GM12878 (cell line): ENCODE measurements at regions of chr7 and their contacts with region 1.

Region 1: GRCh38 chr7:105268511-105269392 is 120.0 kb downstream of the SRPK2 start:
- DNase-seq: no peak
- ATAC-seq: peak; percentile 80
- H3K4me3 ChIP-seq: peak overlapping the region; percentile 66
- H3K27ac ChIP-seq: peak overlapping the region; percentile 79
- H3K4me1 ChIP-seq: peaks cover 6% of the 10 kb centered on the region; the same call in 1 of the 2 replicates
- H3K27me3 ChIP-seq: no peaks in the 10 kb centered on the region
- CTCF ChIP-seq: no peak
- EP300 ChIP-seq: no peak; a peak in 1 of 4 replicates
- POLR2A ChIP-seq: no peak
- RAD21 ChIP-seq: no peak

Region 2: DNA sequence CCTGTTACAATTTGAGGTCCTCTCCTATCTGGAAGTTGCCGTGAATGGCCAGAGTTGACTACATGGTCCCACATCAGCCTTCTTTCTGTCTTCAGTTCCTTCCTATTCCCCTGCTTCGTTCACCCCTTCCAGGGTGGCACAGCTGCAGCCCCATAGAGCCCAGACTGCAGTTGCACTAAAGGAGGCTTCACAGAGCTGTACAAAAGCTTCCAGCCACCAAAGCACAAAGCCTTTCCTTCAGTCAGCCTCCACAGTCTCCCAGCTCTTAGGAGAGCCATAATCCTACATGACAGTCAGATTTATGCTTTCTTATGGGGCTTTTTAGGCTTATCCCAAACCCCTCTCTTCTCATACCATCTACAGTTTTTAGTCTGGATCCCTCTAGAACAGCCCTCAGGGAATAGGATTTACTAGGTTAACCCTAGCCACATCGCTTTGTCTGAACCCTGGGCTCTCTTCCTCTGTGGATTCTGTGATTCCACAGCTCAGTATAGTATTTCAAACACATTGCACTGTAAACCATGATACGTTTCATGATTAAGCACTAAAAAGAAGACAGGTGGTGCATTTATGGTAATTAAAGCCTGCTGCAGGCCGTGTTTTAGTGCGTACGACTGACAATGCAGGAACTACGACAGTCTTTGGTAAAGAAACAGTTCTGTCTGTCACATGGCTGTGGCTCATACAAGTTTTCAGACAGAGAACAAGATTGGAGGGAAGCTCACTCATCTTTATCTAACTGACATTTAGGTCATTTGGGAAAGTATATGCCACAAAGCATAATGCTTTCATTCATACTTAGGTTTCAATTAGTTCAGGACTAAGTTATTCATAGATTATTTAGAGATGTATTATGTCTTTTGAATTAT is 463.1 kb before region 1 on chr7:
- CTCF ChIA-PET with region 1: no interaction called
- POLR2A ChIA-PET with region 1: no interaction called
- RAD21 ChIA-PET with region 1: no interaction called
- SMC1A ChIA-PET with region 1: no interaction called
- in situ Hi-C with region 1: no loop called
- intact Hi-C with region 1: no loop called
- DNase-seq: no peak
- ATAC-seq: no peak
- H3K4me3 ChIP-seq: no peak overlapping the region
- H3K27ac ChIP-seq: no peak overlapping the region
- H3K4me1 ChIP-seq: no peaks in the 10 kb centered on the region
- H3K27me3 ChIP-seq: peaks cover 0 to 1% of the 10 kb centered on the region in 2 experiments; a peak in 1 of 4 replicates
- CTCF ChIP-seq: no peak
- EP300 ChIP-seq: no peak
- POLR2A ChIP-seq: no peak
- RAD21 ChIP-seq: no peak

Region 3: GRCh38 chr7:105187302-105188169 is 81.2 kb before region 1 on chr7:
- CTCF ChIA-PET with region 1: no interaction called
- POLR2A ChIA-PET with region 1: interaction called, 6 read pairs
- RAD21 ChIA-PET with region 1: interaction called, 16 read pairs
- SMC1A ChIA-PET with region 1: interaction called, 4 read pairs
- in situ Hi-C with region 1: no loop called
- intact Hi-C with region 1: no loop called
- DNase-seq: peak; percentile 37
- ATAC-seq: peak; percentile 83
- H3K4me3 ChIP-seq: peak overlapping the region; percentile 6; the same call in 1 of the 2 replicates
- H3K27ac ChIP-seq: peak overlapping the region; percentile 13; the same call in 1 of the 2 replicates
- H3K4me1 ChIP-seq: peaks cover 11% of the 10 kb centered on the region; the same call in 1 of the 2 replicates
- H3K27me3 ChIP-seq: no peaks in the 10 kb centered on the region
- CTCF ChIP-seq: no peak
- EP300 ChIP-seq: no peak
- POLR2A ChIP-seq: no peak
- RAD21 ChIP-seq: no peak

Region 4: GRCh38 chr7:105238198-105238765 is 30.5 kb before region 1 on chr7:
- CTCF ChIA-PET with region 1: interaction called, 5 read pairs
- POLR2A ChIA-PET with region 1: interaction called, 4 read pairs
- RAD21 ChIA-PET with region 1: interaction called, 4 read pairs
- SMC1A ChIA-PET with region 1: interaction called, 13 read pairs
- in situ Hi-C with region 1: no loop called
- intact Hi-C with region 1: no loop called
- DNase-seq: no peak
- ATAC-seq: no peak
- H3K4me3 ChIP-seq: no peak overlapping the region
- H3K27ac ChIP-seq: no peak overlapping the region
- H3K4me1 ChIP-seq: no peaks in the 10 kb centered on the region
- H3K27me3 ChIP-seq: no peaks in the 10 kb centered on the region
- CTCF ChIP-seq: no peak
- EP300 ChIP-seq: no peak
- POLR2A ChIP-seq: no peak
- RAD21 ChIP-seq: no peak

Region 5: GRCh38 chr7:105257338-105257737 is 11.4 kb before region 1 on chr7:
- CTCF ChIA-PET with region 1: interaction called, 3 read pairs
- POLR2A ChIA-PET with region 1: interaction called, 5 read pairs
- RAD21 ChIA-PET with region 1: no interaction called
- SMC1A ChIA-PET with region 1: interaction called, 17 read pairs
- in situ Hi-C with region 1: no loop called
- intact Hi-C with region 1: no loop called
- DNase-seq: no peak
- ATAC-seq: peak; percentile 51
- H3K4me3 ChIP-seq: no peak overlapping the region
- H3K27ac ChIP-seq: no peak overlapping the region
- H3K4me1 ChIP-seq: no peaks in the 10 kb centered on the region; the same call in 1 of the 2 replicates
- H3K27me3 ChIP-seq: no peaks in the 10 kb centered on the region
- CTCF ChIP-seq: no peak
- EP300 ChIP-seq: no peak
- POLR2A ChIP-seq: no peak
- RAD21 ChIP-seq: no peak

Region 6: GRCh38 chr7:105278973-105279687 is 10.4 kb after region 1 on chr7:
- CTCF ChIA-PET with region 1: interaction called, 10 read pairs
- POLR2A ChIA-PET with region 1: interaction called, 8 read pairs
- RAD21 ChIA-PET with region 1: interaction called, 16 read pairs
- SMC1A ChIA-PET with region 1: interaction called, 20 read pairs
- in situ Hi-C with region 1: no loop called
- intact Hi-C with region 1: no loop called
- DNase-seq: no peak
- ATAC-seq: peak; percentile 80
- H3K4me3 ChIP-seq: no peak overlapping the region
- H3K27ac ChIP-seq: peak overlapping the region; percentile 4; the same call in 1 of the 2 replicates
- H3K4me1 ChIP-seq: no peaks in the 10 kb centered on the region
- H3K27me3 ChIP-seq: no peaks in the 10 kb centered on the region
- CTCF ChIP-seq: no peak
- EP300 ChIP-seq: 0 out of 4 replicates have a peak, but pooled peaks have one; percentile 16 to 32
- POLR2A ChIP-seq: no peak
- RAD21 ChIP-seq: no peak

Region 7: GRCh38 chr7:105298439-105298907 is 29.7 kb after region 1 on chr7:
- CTCF ChIA-PET with region 1: no interaction called
- POLR2A ChIA-PET with region 1: no interaction called
- RAD21 ChIA-PET with region 1: interaction called, 13 read pairs
- SMC1A ChIA-PET with region 1: interaction called, 11 read pairs
- in situ Hi-C with region 1: no loop called
- intact Hi-C with region 1: loop called (anchors 5 kb)
- DNase-seq: no peak
- ATAC-seq: peak; percentile 97
- H3K4me3 ChIP-seq: no peak overlapping the region
- H3K27ac ChIP-seq: peak overlapping the region; percentile 66
- H3K4me1 ChIP-seq: peaks cover 15% of the 10 kb centered on the region
- H3K27me3 ChIP-seq: no peaks in the 10 kb centered on the region
- CTCF ChIP-seq: no peak
- EP300 ChIP-seq: no peak
- POLR2A ChIP-seq: no peak
- RAD21 ChIP-seq: no peak

Region 8: GRCh38 chr7:105304040-105304895 is 35.5 kb after region 1 on chr7:
- CTCF ChIA-PET with region 1: interaction called, 3 read pairs
- POLR2A ChIA-PET with region 1: interaction called, 3 read pairs
- RAD21 ChIA-PET with region 1: interaction called, 7 read pairs
- SMC1A ChIA-PET with region 1: interaction called, 6 read pairs
- in situ Hi-C with region 1: no loop called
- intact Hi-C with region 1: loop called (anchors 5 kb)
- DNase-seq: peak; percentile 53
- ATAC-seq: peak; percentile 84
- H3K4me3 ChIP-seq: peak overlapping the region; percentile 51
- H3K27ac ChIP-seq: peak overlapping the region; percentile 77
- H3K4me1 ChIP-seq: peaks cover 29% of the 10 kb centered on the region
- H3K27me3 ChIP-seq: no peaks in the 10 kb centered on the region
- CTCF ChIP-seq: no peak
- EP300 ChIP-seq: peak; percentile 11 to 36; a peak in 1 of 4 replicates
- POLR2A ChIP-seq: no peak
- RAD21 ChIP-seq: no peak